Endothelial cell of umbilical vein (primary cell): ENCODE measurements at regions of chr11 and their contacts with region 1.

Region 1: DNA sequence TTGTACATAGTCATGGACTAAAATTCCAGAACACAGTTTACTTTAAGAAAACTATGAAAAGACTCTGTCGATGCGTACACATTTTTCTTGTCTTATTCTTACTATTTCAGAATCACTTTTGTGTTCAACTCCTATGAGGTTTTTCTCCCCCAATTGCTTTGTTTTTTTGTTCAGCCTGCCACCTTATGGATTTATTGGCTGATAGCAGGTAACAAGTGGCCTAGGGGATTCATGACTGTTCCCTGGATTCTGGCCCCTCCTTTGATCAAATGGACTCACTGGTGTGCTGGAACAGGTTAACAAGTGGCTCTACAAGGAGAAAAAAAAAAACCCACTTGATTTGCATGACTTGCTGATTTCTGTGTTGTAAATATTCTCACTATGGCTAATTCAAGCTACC is 10.6 kb downstream of the MMP20 start:
- DNase-seq: no peak
- H3K4me3 ChIP-seq: no peak overlapping the region
- H3K27ac ChIP-seq: no peak overlapping the region
- H3K4me1 ChIP-seq: peaks cover 11% of the 10 kb centered on the region
- H3K27me3 ChIP-seq: no peaks in the 10 kb centered on the region
- CTCF ChIP-seq: no peak
- POLR2A ChIP-seq: no peak

Region 2: GRCh38 chr11:102293873-102294601 is 320.4 kb before region 1 on chr11:
- CTCF ChIA-PET with region 1: interaction called, 38 read pairs
- POLR2A ChIA-PET with region 1: no interaction called
- dilution Hi-C with region 1: no loop called
- intact Hi-C with region 1: loop called (anchors 2 kb)
- DNase-seq: peak; percentile 50
- H3K4me3 ChIP-seq: no peak overlapping the region
- H3K27ac ChIP-seq: no peak overlapping the region
- H3K4me1 ChIP-seq: no peaks in the 10 kb centered on the region
- H3K27me3 ChIP-seq: no peaks in the 10 kb centered on the region
- CTCF ChIP-seq: peak; percentile 41 to 61
- POLR2A ChIP-seq: no peak

Region 3: GRCh38 chr11:102390667-102391465 is 223.6 kb before region 1 on chr11:
- CTCF ChIA-PET with region 1: interaction called, 26 read pairs
- POLR2A ChIA-PET with region 1: no interaction called
- dilution Hi-C with region 1: no loop called
- intact Hi-C with region 1: loop called (anchors 5 kb)
- DNase-seq: peak; percentile 63
- H3K4me3 ChIP-seq: no peak overlapping the region
- H3K27ac ChIP-seq: no peak overlapping the region
- H3K4me1 ChIP-seq: peaks cover under 1% of the 10 kb centered on the region
- H3K27me3 ChIP-seq: no peaks in the 10 kb centered on the region
- CTCF ChIP-seq: peak; percentile 83 to 88
- POLR2A ChIP-seq: no peak

Region 4: GRCh38 chr11:102518296-102519094 is 96.0 kb before region 1 on chr11:
- CTCF ChIA-PET with region 1: interaction called, 10 read pairs
- POLR2A ChIA-PET with region 1: no interaction called
- dilution Hi-C with region 1: no loop called
- intact Hi-C with region 1: no loop called
- DNase-seq: no peak
- H3K4me3 ChIP-seq: no peak overlapping the region
- H3K27ac ChIP-seq: no peak overlapping the region
- H3K4me1 ChIP-seq: no peaks in the 10 kb centered on the region
- H3K27me3 ChIP-seq: no peaks in the 10 kb centered on the region
- CTCF ChIP-seq: no peak
- POLR2A ChIP-seq: no peak

Region 5: DNA sequence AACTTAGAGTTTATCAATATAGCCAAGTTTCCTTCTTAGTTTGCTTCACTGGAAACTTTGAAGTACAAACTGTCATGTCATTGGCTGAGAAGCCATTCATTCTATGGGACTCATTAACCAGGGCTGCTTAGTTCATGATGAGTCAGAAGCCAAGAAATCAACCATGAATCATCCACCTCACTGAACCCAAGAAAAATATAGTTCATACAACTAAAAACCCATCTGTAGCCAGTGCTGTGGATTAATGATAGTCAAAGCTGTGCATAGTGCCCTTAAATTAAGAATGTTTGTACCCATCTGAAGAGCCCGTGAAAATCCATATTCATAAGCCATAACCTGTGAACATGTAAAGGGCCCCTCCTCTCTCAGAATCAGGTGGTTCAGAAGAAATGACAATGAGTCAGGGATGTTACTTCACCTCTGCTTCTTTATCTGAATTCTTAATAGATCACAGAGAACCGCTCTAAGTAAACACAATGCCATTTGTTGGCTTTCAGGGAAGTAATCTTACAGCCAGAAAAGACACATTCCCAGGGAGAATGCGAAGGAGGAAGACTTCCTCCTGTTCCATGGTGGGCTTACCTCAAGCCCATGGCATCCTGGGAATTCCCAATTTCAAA is 14.7 kb before region 1 on chr11:
- CTCF ChIA-PET with region 1: interaction called, 14 read pairs
- POLR2A ChIA-PET with region 1: no interaction called
- dilution Hi-C with region 1: no loop called
- intact Hi-C with region 1: no loop called
- DNase-seq: peak; percentile 94
- H3K4me3 ChIP-seq: peak overlapping the region in 1 of 3 experiments; percentile 40
- H3K27ac ChIP-seq: peak overlapping the region; percentile 95
- H3K4me1 ChIP-seq: peaks cover 29% of the 10 kb centered on the region
- H3K27me3 ChIP-seq: no peaks in the 10 kb centered on the region
- CTCF ChIP-seq: no peak
- POLR2A ChIP-seq: peak; percentile 28

Region 6: GRCh38 chr11:102676084-102676483 is 61.6 kb after region 1 on chr11:
- CTCF ChIA-PET with region 1: no interaction called
- POLR2A ChIA-PET with region 1: no interaction called
- dilution Hi-C with region 1: no loop called
- intact Hi-C with region 1: no loop called
- DNase-seq: no peak
- H3K4me3 ChIP-seq: no peak overlapping the region
- H3K27ac ChIP-seq: no peak overlapping the region
- H3K4me1 ChIP-seq: no peaks in the 10 kb centered on the region
- H3K27me3 ChIP-seq: no peaks in the 10 kb centered on the region
- CTCF ChIP-seq: no peak
- POLR2A ChIP-seq: no peak